B cell (primary cell): ENCODE measurements at regions of chr2 and their contacts with region 1.

Region 1: GRCh38 chr2:196926562-196927375 is at the start of gene PGAP1:
- DNase-seq: peak; percentile 88
- ATAC-seq: peak; percentile 91
- H3K4me3 ChIP-seq: peak within 1 kb of the TSS; percentile 76 to 89 (median 86)
- H3K4me3 Mint-ChIP-seq: peak within 1 kb of the TSS; percentile 90
- H3K27ac ChIP-seq: peak within 1 kb of the TSS; percentile 4 to 45
- H3K27ac Mint-ChIP-seq: peak within 1 kb of the TSS; percentile 73
- H3K4me1 ChIP-seq: peaks cover 10 to 14% of the 10 kb centered on the region in 2 donors
- H3K4me1 Mint-ChIP-seq: peaks cover 20% of the 10 kb centered on the region
- H3K27me3 ChIP-seq: peaks cover 0 to 8% (median 3%) of the 10 kb centered on the region in 4 experiments
- H3K27me3 Mint-ChIP-seq: peaks cover 16% of the 10 kb centered on the region
- CTCF ChIP-seq: no peak
- total RNA-seq, gene PGAP1: 21.8 and 22.9 TPM in 2 replicates

Region 2: GRCh38 chr2:196798980-196799379 is 127.8 kb before region 1 on chr2:
- CTCF ChIA-PET with region 1: no interaction called
- POLR2A ChIA-PET with region 1: interaction called, 3 read pairs
- intact Hi-C with region 1: loop called (anchors 1 kb)
- DNase-seq: no peak
- ATAC-seq: no peak
- H3K4me3 ChIP-seq: peak overlapping the region; percentile 67 to 85 (median 79)
- H3K4me3 Mint-ChIP-seq: peak overlapping the region; percentile 96
- H3K27ac ChIP-seq: peak overlapping the region; percentile 61 to 87
- H3K27ac Mint-ChIP-seq: peak overlapping the region; percentile 92
- H3K4me1 ChIP-seq: peaks cover 5 to 8% of the 10 kb centered on the region in 2 donors
- H3K4me1 Mint-ChIP-seq: peaks cover 15% of the 10 kb centered on the region
- H3K27me3 ChIP-seq: peaks cover 0 to 10% (median 0%) of the 10 kb centered on the region in 4 experiments
- H3K27me3 Mint-ChIP-seq: peaks cover 12% of the 10 kb centered on the region
- CTCF ChIP-seq: no peak

Region 3: GRCh38 chr2:196987649-196988364 is 61.0 kb after region 1 on chr2:
- CTCF ChIA-PET with region 1: no interaction called
- POLR2A ChIA-PET with region 1: interaction called, 4 read pairs
- intact Hi-C with region 1: loop called (anchors 5 kb)
- DNase-seq: no peak
- ATAC-seq: no peak
- H3K4me3 ChIP-seq: no peak overlapping the region
- H3K4me3 Mint-ChIP-seq: peak overlapping the region; percentile 26
- H3K27ac ChIP-seq: peak overlapping the region in 1 of 2 donors; percentile 59
- H3K27ac Mint-ChIP-seq: peak overlapping the region; percentile 86
- H3K4me1 ChIP-seq: peaks cover 12 to 15% of the 10 kb centered on the region in 2 donors
- H3K4me1 Mint-ChIP-seq: peaks cover 40% of the 10 kb centered on the region
- H3K27me3 ChIP-seq: no peaks in the 10 kb centered on the region
- H3K27me3 Mint-ChIP-seq: no peaks in the 10 kb centered on the region
- CTCF ChIP-seq: no peak

Region 4: GRCh38 chr2:197453161-197453914 is 526.6 kb after region 1 on chr2 and contains the start of gene COQ10B:
- CTCF ChIA-PET with region 1: no interaction called
- POLR2A ChIA-PET with region 1: no interaction called
- intact Hi-C with region 1: loop called (anchors 1 kb)
- DNase-seq: peak; percentile 99
- ATAC-seq: peak; percentile 90
- H3K4me3 ChIP-seq: peak within 1 kb of the TSS; percentile 82 to 99 (median 89)
- H3K4me3 Mint-ChIP-seq: peak within 1 kb of the TSS; percentile 99
- H3K27ac ChIP-seq: peak within 1 kb of the TSS; percentile 95 to 96
- H3K27ac Mint-ChIP-seq: peak within 1 kb of the TSS; percentile 99
- H3K4me1 ChIP-seq: peaks cover 17 to 19% of the 10 kb centered on the region in 2 donors
- H3K4me1 Mint-ChIP-seq: peaks cover 42% of the 10 kb centered on the region
- H3K27me3 ChIP-seq: no peaks in the 10 kb centered on the region
- H3K27me3 Mint-ChIP-seq: no peaks in the 10 kb centered on the region
- CTCF ChIP-seq: no peak
- total RNA-seq, gene COQ10B: 29.1 and 29.6 TPM in 2 replicates